ENCODE measurements at regions of chr4 and their contacts with region 1.

Region 1: DNA sequence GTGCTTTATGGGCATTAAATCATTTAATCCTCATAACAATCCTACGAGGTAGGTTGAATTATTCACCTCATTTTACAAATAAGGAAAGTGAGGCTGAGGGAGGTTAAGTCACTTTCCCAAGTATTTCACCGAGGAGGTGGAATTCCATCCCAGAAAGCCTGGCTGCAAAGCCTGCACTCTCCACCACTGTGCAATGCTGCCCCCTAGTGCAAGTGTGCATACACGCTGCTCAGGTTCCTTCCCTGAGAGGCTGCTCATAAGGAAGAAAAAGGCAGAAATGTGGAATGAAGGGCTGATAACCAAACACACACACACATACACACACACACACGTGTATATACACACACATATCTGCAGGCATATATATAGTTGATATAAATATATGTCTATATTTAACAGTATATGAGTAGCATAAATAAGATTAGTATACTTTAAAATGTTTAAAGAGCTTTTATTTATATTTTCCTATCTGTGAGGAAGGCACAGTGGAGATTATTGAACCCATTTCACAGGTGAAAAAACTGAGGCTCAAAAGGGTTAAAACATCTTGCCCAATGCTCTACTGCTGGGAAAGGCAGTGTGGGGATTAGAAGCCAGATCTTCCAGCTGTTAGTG is 714.5 kb upstream of the TENM3 start:
- DNase-seq: peak; percentile 65
- ATAC-seq: peak; percentile 89

Region 2: GRCh38 chr4:180932370-180933001 is 596.2 kb before region 1 on chr4:
- intact Hi-C with region 1: no loop called
- DNase-seq: no peak
- ATAC-seq: no peak

Region 3: DNA sequence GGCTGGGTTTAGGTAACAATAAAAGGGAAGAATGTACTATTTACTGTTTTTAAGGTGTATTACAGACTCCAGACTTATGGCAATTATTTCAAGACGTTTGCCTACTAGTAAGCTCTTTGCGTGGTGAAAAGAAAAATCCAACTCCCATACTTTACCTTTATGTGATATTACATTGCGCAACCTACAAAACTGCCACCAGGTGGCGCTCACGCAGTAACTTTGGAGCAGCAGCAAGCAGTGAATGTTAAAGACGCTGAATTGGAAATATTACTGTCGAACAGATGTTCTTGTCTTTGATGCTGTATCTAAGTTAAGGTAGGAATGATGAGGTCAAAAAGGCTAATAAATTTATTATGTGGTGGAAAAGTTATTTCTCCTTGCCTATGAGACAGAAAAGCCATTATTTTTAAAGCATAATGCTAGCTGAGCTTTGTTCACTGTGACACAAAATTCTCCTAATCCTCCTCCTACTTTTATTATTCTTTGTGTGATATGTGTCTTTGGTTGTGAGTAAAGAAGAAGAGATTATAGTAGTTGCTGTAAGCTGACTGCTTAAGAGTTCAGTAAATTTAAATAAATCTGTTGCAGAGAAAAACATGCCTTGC is 385.3 kb before region 1 on chr4:
- intact Hi-C with region 1: loop called (anchors 5 kb)
- DNase-seq: peak; percentile 83
- ATAC-seq: peak; percentile 78

Region 4: GRCh38 chr4:181261279-181261678 is 267.4 kb before region 1 on chr4:
- intact Hi-C with region 1: loop called (anchors 5 kb)
- DNase-seq: no peak
- ATAC-seq: no peak

Measured in Right ventricle myocardium superior (tissue), 1 donor.